OCI-LY7 (cell line): ENCODE measurements at regions of chr12 and their contacts with region 1.

Region 1: DNA sequence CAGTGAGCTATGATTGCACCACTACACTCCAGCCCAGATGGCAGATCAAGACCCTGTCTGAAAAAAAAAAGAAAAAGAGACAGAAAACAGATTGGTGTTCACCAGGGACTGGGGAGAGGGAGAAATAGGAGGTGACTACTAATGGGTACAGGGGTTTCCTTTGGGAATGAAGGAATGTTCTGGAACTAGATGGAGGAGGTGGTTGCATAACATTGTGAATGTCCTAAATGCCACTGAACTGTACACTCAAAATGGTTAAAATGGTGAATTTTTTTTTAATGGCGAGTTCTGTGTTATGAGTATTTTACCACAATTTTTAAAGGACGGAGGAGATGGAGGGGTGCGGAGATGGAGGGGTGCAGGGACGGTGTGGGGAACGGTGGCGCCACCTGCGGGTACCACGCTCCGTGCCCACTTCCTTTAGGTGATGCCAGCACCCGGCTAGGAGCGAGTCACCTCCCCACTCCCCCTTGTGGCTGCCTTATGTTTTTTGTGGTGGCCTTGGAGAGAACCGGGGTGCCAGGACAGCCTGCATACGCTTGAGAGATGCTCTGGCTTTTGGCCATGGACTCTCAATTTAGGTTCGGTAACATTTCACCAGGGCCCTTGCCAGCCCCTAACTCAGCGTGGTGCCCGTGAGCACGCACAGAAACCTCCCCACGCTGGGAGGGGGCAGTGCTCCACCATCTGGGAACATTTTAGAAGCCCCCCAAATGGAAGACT is 16.1 kb downstream of the UBC start:
- DNase-seq: peak; percentile 86
- H3K4me3 ChIP-seq: peak overlapping the region; percentile 40
- H3K27ac ChIP-seq: peak overlapping the region; percentile 32
- H3K4me1 ChIP-seq: peaks cover 65% of the 10 kb centered on the region
- CTCF ChIP-seq: peak; percentile 93

Region 2: DNA sequence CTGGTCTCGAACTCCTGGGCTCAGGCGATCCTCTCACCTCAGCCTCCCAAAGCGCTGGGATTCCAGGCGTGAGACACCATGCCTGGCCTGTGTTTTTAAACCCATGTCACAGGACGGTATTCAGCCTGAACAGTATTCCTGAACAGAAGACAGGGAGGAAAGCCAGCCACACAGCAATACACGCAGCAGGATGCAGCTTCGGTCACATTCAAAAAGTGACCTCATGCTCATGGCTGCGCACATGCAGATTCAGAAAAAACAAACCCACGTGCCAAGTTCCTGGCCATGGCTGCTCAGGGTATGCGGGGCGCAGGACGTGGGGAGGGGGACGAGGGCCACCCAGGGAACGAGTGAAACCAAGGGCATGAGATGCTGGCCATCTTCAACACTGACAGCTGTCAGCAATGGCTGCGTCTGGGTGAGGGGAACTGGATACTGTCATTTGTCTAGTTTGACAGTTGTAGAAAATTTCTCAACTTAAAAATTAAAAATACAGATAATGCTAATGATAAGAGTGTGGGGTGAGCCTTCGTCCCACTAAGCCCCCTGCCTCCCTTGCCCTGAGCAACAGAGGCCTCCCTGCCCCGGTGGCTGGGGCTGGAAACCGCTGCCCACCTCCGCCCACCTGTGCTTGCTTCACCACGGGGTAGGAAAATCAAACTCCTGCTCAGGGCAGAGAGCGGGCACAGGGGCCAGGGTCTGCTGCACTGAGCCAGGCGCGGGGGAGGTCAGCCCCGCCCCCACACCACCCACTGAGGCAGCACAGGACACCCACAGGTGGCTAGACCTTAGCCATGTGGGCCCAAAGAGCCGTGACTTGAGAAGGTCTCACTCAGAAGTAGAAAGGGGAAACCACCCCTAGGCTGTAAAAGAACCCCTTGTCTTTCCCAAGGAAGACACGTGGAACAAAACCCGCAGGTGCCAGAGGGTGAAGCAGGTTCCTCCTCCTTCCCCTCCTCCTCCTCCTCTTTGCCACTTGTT is 118.9 kb before region 1 on chr12:
- CTCF ChIA-PET with region 1: interaction called, 3 read pairs
- POLR2A ChIA-PET with region 1: interaction called, 3 read pairs
- intact Hi-C with region 1: loop called (anchors 5 kb)
- DNase-seq: peak; percentile 87
- H3K4me3 ChIP-seq: no peak overlapping the region
- H3K27ac ChIP-seq: peak overlapping the region; percentile 64
- H3K4me1 ChIP-seq: peaks cover 78% of the 10 kb centered on the region
- CTCF ChIP-seq: no peak

Region 3: GRCh38 chr12:124827588-124828184 is 70.7 kb before region 1 on chr12:
- CTCF ChIA-PET with region 1: no interaction called
- POLR2A ChIA-PET with region 1: interaction called, 7 read pairs
- intact Hi-C with region 1: loop called (anchors 2 kb)
- DNase-seq: no peak
- H3K4me3 ChIP-seq: no peak overlapping the region
- H3K27ac ChIP-seq: no peak overlapping the region
- H3K4me1 ChIP-seq: no peaks in the 10 kb centered on the region
- CTCF ChIP-seq: no peak

Region 4: DNA sequence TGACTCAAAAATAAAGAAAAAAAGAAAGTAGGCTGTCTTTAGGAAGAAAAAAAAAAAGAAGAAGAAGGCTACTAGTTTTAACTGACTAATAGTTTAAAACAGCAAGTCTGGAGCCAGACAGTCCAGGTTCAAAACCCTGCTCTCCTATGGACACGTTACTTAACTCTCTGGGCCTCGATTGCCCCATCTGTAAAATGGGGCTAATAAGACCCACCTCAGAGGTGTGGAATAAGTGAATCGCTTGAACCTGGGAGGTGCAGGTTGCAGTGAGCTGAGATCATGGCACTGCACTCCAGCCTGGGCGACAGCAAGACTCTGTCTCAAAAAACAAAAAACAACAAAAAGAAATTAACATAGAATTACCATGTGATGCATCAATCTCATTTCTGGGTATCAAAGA is 24.2 kb before region 1 on chr12:
- CTCF ChIA-PET with region 1: no interaction called
- POLR2A ChIA-PET with region 1: no interaction called
- intact Hi-C with region 1: no loop called
- DNase-seq: no peak
- H3K4me3 ChIP-seq: no peak overlapping the region
- H3K27ac ChIP-seq: no peak overlapping the region
- H3K4me1 ChIP-seq: peaks cover 12% of the 10 kb centered on the region
- CTCF ChIP-seq: no peak